MCF 10A (cell line): ENCODE measurements at regions of chr15 and their contacts with region 1.

Region 1: GRCh38 chr15:56365075-56365711 is at the start of gene TEX9:
- DNase-seq: peak; percentile 86
- H3K4me3 Mint-ChIP-seq: peak within 1 kb of the TSS; percentile 76
- H3K27ac Mint-ChIP-seq: peak within 1 kb of the TSS; percentile 72
- H3K4me1 Mint-ChIP-seq: peaks cover 33% of the 10 kb centered on the region
- H3K27me3 Mint-ChIP-seq: no peaks in the 10 kb centered on the region
- CTCF ChIP-seq: no peak
- total RNA-seq, gene TEX9: 6.3 and 6.8 TPM in 2 replicates

Region 2: DNA sequence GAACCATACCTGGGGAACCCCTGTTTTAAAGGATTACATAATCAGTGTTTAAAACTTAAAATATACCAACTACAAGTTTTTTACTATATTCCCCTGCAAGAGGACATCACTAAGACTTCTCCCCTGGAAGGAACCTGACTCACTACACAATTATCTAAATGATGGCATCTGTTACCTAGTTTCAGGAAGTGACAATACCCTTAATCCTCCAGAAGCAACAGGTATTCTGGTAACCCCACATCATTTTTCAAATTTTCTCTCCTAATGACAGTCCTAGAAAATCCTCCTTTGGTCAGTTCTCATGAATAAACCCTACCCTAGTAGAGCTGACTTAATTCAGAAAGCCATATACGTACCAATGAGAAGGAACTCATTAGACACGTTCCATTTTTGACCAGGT is 200.0 kb before region 1 on chr15:
- CTCF ChIA-PET with region 1: no interaction called
- POLR2A ChIA-PET with region 1: no interaction called
- intact Hi-C with region 1: no loop called
- DNase-seq: no peak
- H3K4me3 Mint-ChIP-seq: no peak overlapping the region
- H3K27ac Mint-ChIP-seq: no peak overlapping the region
- H3K4me1 Mint-ChIP-seq: peaks cover 22% of the 10 kb centered on the region
- H3K27me3 Mint-ChIP-seq: no peaks in the 10 kb centered on the region
- CTCF ChIP-seq: no peak

Region 3: GRCh38 chr15:56327701-56328452 is 37.3 kb before region 1 on chr15:
- CTCF ChIA-PET with region 1: interaction called, 3 read pairs
- POLR2A ChIA-PET with region 1: interaction called, 17 read pairs
- intact Hi-C with region 1: no loop called
- DNase-seq: peak; percentile 98
- H3K4me3 Mint-ChIP-seq: peak overlapping the region; percentile 60
- H3K27ac Mint-ChIP-seq: peak overlapping the region; percentile 64
- H3K4me1 Mint-ChIP-seq: peaks cover 38% of the 10 kb centered on the region
- H3K27me3 Mint-ChIP-seq: no peaks in the 10 kb centered on the region
- CTCF ChIP-seq: no peak

Region 4: DNA sequence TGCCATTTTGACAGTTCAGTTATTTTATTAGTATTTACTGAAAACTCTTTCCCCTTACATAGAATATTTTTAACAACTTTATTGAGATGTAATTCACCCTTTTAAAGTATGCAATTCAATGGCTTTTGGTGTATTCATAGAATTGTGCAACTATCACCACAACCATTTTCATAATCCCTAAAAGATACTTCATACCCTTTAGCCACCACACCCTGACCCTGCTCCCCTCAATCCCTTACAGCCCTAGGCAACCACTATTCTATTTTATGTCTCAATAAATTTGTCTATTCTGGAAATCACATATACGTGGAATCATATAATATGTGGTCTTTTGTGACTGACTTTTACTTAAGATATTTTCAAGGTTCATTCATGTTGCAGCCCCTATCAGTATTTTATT is 29.7 kb after region 1 on chr15:
- CTCF ChIA-PET with region 1: no interaction called
- POLR2A ChIA-PET with region 1: no interaction called
- intact Hi-C with region 1: no loop called
- DNase-seq: no peak
- H3K4me3 Mint-ChIP-seq: no peak overlapping the region
- H3K27ac Mint-ChIP-seq: no peak overlapping the region
- H3K4me1 Mint-ChIP-seq: no peaks in the 10 kb centered on the region
- H3K27me3 Mint-ChIP-seq: no peaks in the 10 kb centered on the region
- CTCF ChIP-seq: no peak